Activated naive CD4-positive, alpha-beta T cell treated with anti-CD3 and anti-CD28 coated beads, Interleukin-2, amount 10 ng/mL, durations not matched to agents 7 days and 5 days (primary cell): ENCODE measurements at regions of chr10 and their contacts with region 1.

Region 1: GRCh38 chr10:14889318-14889717 is 10.7 kb downstream of the SUV39H2 start:
- DNase-seq: no peak
- H3K4me3 Mint-ChIP-seq: no peak overlapping the region
- H3K27ac Mint-ChIP-seq: no peak overlapping the region
- H3K4me1 Mint-ChIP-seq: peaks cover 4% of the 10 kb centered on the region
- H3K27me3 Mint-ChIP-seq: no peaks in the 10 kb centered on the region

Region 2: DNA sequence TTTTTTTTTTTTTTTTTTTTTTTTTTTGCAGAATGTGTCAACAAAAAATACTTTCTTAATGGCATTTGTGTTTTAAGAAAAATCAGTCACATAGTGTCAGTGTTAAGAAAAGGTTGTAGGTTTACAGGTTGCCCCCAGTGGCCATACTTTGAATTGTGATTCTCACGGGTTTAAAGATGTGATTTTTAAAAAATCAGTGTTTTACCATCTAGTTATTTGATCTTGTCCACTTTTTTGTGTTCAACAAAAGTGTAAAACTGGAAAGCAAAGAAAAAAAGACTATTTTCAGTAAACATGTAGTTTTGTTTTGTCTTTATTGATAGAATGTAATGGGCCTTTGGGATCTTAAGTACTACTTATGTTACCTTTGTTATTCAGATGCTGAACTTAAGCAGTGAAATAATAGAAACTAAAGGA is 15.0 kb after region 1 on chr10:
- CTCF ChIA-PET with region 1: interaction called, 13 read pairs
- DNase-seq: peak; percentile 46
- H3K4me3 Mint-ChIP-seq: no peak overlapping the region
- H3K27ac Mint-ChIP-seq: no peak overlapping the region
- H3K4me1 Mint-ChIP-seq: peaks cover 15% of the 10 kb centered on the region
- H3K27me3 Mint-ChIP-seq: no peaks in the 10 kb centered on the region